Left cardiac atrium (tissue), 4 donors: ENCODE measurements at regions of chr19 and their contacts with region 1.

Region 1: DNA sequence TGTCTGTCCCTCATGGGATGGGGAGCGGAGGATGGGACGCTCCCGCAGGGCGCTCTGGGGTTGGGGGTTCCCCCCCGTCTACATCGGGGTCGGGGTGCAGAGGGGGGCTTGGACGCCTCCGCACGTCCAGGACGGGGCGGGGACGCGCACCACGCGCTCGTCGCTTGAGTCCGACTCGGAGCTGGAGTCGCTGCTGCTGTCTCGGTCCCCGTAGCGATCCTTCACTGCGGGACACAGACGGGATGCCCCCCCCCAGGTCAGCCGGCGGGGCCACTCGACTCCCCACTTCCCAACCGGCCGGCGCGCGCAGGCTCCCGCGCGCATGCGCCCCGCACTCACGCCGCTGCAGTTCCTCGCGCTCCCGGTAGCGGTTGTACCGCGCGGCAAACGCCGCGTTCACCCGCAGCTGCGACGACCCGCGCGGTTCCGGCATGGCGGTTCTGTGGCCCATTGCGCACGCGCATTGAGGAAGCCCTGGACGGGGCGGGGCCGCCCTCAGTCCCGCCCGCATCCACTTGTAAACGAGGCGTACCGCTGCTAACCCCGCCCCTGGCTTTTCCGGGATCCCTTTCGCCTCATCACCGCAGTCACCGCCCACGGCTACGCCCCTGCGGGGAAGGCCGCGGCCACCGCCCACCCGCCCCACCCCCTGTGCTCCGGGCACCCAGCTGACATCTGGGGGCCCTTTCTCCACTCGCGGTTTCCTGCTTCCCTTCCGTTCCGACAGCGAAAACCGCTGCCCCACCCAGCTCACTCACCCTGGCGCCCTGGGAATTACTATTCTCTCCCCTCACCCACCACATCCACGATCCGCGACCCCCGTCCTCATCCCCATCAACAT is at the start of gene KRI1:
- DNase-seq: peak; percentile 99
- ATAC-seq: peak; percentile 87 to 88
- total RNA-seq, gene KRI1: 11.0 to 15.0 TPM

Region 2: GRCh38 chr19:10502524-10503001 is 63.2 kb before region 1 on chr19:
- intact Hi-C with region 1: loop called in 1 of 2 experiments (anchors 10 kb)
- DNase-seq: peak; percentile 96
- ATAC-seq: peak; percentile 97